Activated T-helper 1 cell treated with anti-CD3 and anti-CD28 coated beads, Interleukin-12 subunit alpha, Interleukin-12 subunit beta, Interleukin-2, Interleukin-4 antibody, amounts not matched to agents 30 ng/mL and 10 ng/mL and 1 ng/mL, durations not matched to agents 14 hours and 24 hours and 36 hours (primary cell): ENCODE measurements at regions of chr18 and their contacts with region 1.

Region 1: GRCh38 chr18:21612125-21612991 is at the start of gene SNRPD1:
- DNase-seq: peak; percentile 89
- H3K4me3 Mint-ChIP-seq: peak within 1 kb of the TSS; percentile 96
- H3K27ac Mint-ChIP-seq: peak within 1 kb of the TSS; percentile 98
- H3K4me1 Mint-ChIP-seq: peaks cover 18% of the 10 kb centered on the region
- H3K27me3 Mint-ChIP-seq: no peaks in the 10 kb centered on the region
- total RNA-seq, gene SNRPD1: 170 and 173 TPM in 2 replicates

Region 2: DNA sequence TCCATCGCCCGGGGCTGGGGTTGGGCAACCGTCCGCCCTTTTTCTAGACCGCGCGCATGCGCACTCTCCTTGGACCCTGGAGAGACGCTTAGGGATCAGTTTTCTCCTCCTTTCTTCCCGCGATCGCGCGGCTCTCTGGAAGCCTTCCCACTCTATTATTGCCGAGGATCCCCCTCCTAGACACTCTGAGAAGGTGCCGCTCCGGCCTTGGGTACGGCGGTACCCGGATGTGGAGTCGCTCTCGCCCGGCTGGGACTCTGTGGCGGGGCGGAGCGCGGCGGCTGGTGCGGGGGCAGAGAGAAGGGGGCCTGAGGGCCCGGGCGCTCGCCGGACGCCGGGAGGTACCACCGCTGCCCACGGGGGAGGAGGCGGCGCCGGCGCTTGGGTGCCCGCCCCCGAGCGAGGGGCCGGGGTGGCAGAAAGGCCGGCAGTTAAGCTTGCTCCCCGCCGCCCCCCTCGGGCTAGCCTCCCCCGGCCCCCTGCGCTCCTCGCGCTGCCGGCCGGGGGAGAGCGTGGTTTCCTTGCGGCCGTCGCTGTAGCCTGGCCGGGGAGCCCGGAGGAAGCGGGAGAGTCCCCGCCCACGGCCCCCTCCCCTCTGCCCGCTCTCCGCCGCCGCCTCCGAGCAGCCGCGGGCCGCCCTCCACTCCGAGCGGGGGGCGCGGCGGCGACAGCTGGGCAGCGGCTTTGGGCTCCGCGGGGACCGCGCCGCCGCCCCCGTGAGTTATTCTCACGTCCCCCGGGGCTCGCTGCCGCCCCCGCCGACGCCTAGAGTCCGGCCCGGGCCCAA is 128.6 kb after region 1 on chr18 and contains the start of gene MIB1:
- intact Hi-C with region 1: loop called (anchors 1 kb)
- DNase-seq: no peak
- H3K4me3 Mint-ChIP-seq: peak within 1 kb of the TSS; percentile 93
- H3K27ac Mint-ChIP-seq: peak within 1 kb of the TSS; percentile 94
- H3K4me1 Mint-ChIP-seq: peaks cover 45% of the 10 kb centered on the region
- H3K27me3 Mint-ChIP-seq: peaks cover 18% of the 10 kb centered on the region
- total RNA-seq, gene MIB1: 29.8 and 31.7 TPM in 2 replicates

Region 3: GRCh38 chr18:22066083-22066485 is 453.7 kb after region 1 on chr18:
- intact Hi-C with region 1: no loop called
- DNase-seq: no peak
- H3K4me3 Mint-ChIP-seq: no peak overlapping the region
- H3K27ac Mint-ChIP-seq: no peak overlapping the region
- H3K4me1 Mint-ChIP-seq: no peaks in the 10 kb centered on the region
- H3K27me3 Mint-ChIP-seq: no peaks in the 10 kb centered on the region